Ascending aorta (tissue), 2 donors: ENCODE measurements at regions of chr17 and their contacts with region 1.

Region 1: GRCh38 chr17:8118769-8119580 is 661 bp upstream of the ALOXE3 start:
- DNase-seq: peak; percentile 63 to 95
- H3K4me3 ChIP-seq: peak overlapping the region; percentile 53 to 65
- H3K27ac ChIP-seq: peak overlapping the region; percentile 37 to 70
- H3K4me1 ChIP-seq: peaks cover 21 to 44% of the 10 kb centered on the region in 2 donors
- H3K27me3 ChIP-seq: no peaks in the 10 kb centered on the region
- CTCF ChIP-seq: peak; percentile 91 to 97 (median 92)

Region 2: GRCh38 chr17:7856883-7857723 is 261.9 kb before region 1 on chr17 and contains the start of gene NAA38:
- intact Hi-C with region 1: loop called (anchors 5 kb)
- DNase-seq: peak; percentile 92 to 99
- H3K4me3 ChIP-seq: peak within 1 kb of the TSS; percentile 73 to 76
- H3K27ac ChIP-seq: peak within 1 kb of the TSS; percentile 87 to 88
- H3K4me1 ChIP-seq: peaks cover 9 to 25% of the 10 kb centered on the region in 2 donors
- H3K27me3 ChIP-seq: no peaks in the 10 kb centered on the region
- CTCF ChIP-seq: peak; percentile 39 to 55 (median 51)
- total RNA-seq, gene NAA38: 59.0 TPM

Region 3: GRCh38 chr17:8091033-8091687 is 27.8 kb before region 1 on chr17:
- intact Hi-C with region 1: loop called (anchors 1 kb)
- DNase-seq: no peak
- H3K4me3 ChIP-seq: no peak overlapping the region
- H3K27ac ChIP-seq: no peak overlapping the region
- H3K4me1 ChIP-seq: no peaks in the 10 kb centered on the region
- H3K27me3 ChIP-seq: no peaks in the 10 kb centered on the region
- CTCF ChIP-seq: no peak

Region 4: DNA sequence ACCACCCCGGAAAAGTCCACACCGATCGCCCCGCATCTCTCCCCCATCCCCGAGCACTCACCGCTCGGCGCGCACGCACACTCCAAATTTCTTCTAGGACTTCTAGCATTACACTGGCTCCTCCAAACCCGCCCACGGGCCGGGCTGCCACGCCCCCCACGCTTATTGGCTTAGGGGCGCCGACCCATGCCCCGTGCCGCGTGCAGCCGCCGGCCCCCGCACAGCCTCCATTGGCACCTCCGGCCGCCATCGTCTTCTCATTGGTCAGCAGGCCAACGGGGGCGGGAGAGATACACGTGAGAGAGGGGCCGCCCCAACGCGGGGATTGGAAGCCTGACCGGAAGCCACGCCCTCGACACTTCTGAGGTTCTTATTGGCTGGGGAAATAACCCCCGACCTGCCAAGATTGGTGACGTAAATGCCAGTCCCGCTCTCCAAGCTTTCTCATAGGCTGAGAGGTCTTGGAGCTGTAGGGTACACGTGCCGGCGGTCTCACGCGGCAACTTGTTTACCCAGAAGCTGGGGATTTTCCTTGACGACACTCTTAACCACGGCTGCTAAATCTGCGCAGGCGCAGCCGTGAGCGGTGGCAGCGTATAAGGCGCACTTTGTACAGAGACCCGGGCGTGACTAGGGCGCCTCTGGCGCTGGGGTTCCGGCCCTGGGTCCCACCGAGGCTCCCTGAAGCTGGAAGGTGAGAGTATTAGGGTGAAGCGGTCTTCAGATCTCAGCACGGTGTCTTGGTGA is 37.4 kb after region 1 on chr17:
- intact Hi-C with region 1: loop called (anchors 1 kb)
- DNase-seq: peak; percentile 100
- H3K4me3 ChIP-seq: peak overlapping the region; percentile 77 to 90
- H3K27ac ChIP-seq: peak overlapping the region; percentile 99 to 100
- H3K4me1 ChIP-seq: peaks cover 13 to 46% of the 10 kb centered on the region in 2 donors
- H3K27me3 ChIP-seq: no peaks in the 10 kb centered on the region
- CTCF ChIP-seq: peak in 1 of 3 experiments; percentile 22

Region 5: GRCh38 chr17:8209909-8210760 is 91.2 kb after region 1 on chr17 and contains the start of gene AURKB:
- intact Hi-C with region 1: no loop called
- DNase-seq: peak; percentile 82 to 97
- H3K4me3 ChIP-seq: peak within 1 kb of the TSS; percentile 63 to 74
- H3K27ac ChIP-seq: peak within 1 kb of the TSS; percentile 78 to 80
- H3K4me1 ChIP-seq: peaks cover 0 to 15% of the 10 kb centered on the region in 2 donors
- H3K27me3 ChIP-seq: no peaks in the 10 kb centered on the region
- CTCF ChIP-seq: no peak
- total RNA-seq, gene AURKB: not detected

Region 6: DNA sequence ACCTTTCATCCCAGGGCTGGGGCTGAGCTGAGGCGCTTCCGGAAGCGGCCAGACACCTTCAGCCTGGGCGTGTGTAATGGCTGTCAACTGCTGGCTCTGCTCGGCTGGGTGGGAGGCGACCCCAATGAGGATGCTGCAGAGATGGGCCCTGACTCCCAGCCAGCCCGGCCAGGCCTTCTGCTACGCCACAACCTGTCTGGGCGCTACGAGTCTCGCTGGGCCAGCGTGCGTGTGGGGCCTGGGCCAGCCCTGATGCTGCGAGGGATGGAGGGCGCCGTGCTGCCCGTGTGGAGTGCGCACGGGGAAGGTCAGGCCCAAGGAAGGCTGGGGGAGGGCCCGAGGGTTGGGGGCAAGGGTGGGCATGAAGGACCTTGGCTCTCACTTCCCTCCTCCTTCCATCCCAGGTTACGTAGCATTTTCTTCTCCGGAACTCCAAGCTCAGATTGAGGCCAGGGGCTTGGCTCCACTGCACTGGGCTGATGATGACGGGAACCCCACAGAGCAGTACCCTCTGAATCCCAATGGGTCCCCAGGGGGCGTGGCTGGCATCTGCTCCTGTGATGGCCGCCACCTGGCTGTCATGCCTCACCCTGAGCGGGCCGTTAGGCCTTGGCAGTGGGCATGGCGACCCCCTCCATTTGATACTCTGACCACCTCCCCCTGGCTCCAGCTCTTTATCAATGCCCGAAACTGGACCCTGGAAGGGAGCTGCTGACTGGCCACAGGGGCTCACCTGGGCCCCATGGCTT is 149.7 kb after region 1 on chr17:
- intact Hi-C with region 1: no loop called
- DNase-seq: no peak
- H3K4me3 ChIP-seq: no peak overlapping the region
- H3K27ac ChIP-seq: no peak overlapping the region
- H3K4me1 ChIP-seq: no peaks in the 10 kb centered on the region
- H3K27me3 ChIP-seq: no peaks in the 10 kb centered on the region
- CTCF ChIP-seq: no peak

Region 7: DNA sequence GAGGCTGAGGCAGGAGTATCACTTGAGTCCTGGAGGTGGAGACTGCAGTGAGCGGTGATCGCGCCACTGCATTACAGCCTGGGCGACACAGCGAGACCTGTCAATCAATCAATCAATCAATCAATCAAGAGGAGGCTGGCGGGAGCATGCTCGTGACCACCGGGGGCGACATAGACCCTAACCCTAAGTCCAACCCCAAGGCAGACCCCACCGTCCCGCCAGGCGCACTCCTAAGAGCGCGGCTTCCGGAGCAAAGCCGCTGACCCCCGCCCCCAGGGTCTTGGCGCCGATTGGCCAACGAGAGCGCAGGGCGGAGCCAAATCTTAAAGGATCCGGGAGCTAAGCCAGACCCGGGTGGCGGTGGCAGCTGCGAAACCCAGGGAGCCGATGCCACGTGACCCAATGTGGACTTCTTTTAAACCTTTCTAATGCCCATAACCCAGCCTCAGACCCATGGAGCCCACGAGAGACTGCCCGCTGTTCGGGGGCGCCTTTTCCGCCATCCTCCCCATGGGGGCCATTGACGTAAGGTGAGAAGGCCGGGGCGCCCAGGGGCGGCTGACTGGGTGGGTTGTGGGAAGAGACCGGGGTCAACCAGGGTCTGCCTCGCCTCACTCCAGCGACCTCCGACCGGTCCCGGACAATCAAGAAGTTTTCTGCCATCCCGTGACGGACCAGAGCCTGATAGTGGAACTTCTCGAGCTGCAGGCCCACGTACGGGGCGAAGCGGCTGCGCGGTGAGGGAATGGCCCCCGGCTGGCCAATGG is 169.5 kb after region 1 on chr17 and contains the start of gene RANGRF:
- intact Hi-C with region 1: loop called (anchors 2 kb)
- DNase-seq: peak; percentile 42 to 93
- H3K4me3 ChIP-seq: peak within 1 kb of the TSS; percentile 81 to 87
- H3K27ac ChIP-seq: peak within 1 kb of the TSS; percentile 89 to 94
- H3K4me1 ChIP-seq: peaks cover 4 to 11% of the 10 kb centered on the region in 2 donors
- H3K27me3 ChIP-seq: no peaks in the 10 kb centered on the region
- CTCF ChIP-seq: no peak
- total RNA-seq, gene RANGRF: 15.5 TPM